Activated CD8-positive, alpha-beta T cell treated with anti-CD3 and anti-CD28 coated beads for 36 hours (primary cell): ENCODE measurements at regions of chr1 and their contacts with region 1.

Region 1: DNA sequence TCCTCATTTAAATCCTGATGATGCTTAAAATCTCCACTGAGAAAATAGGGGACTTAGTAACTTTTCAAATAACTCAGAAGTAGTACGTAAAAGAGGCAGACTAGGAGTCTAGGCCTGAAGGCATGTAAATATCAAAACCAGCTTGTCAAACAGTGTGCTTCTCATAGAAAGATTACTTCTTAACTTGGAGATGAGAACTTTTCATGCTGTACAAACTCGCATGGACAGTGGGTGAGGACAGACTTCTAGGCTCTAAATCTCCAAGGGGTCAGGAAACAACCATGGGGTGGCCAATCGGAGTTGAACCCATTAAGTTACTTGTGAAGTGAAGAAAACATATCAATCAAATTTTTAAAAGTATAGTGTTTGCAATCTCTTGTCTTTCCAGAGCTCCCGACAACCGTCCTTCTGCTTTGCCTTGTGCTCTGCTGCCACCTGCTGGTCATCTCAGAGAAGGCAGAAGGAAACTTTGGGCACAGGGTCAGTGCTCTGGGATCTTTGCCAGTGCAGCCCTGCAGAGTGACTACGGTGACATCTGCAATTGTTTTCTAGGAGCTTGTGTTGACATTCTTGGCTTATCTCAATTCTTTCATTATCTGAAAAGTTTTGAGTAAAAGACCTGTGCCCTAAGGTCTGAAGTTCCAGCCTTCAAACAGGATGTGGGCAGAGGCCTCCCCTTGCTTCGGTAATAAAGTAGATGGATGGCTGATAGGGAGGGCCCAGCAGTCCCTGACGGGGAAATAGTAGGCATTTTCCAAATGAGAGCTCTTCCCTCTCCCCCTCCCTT is 105.1 kb upstream of the PDE4B start:
- DNase-seq: peak; percentile 81
- ATAC-seq: peak; percentile 86
- H3K4me3 Mint-ChIP-seq: no peak overlapping the region
- H3K27ac Mint-ChIP-seq: no peak overlapping the region
- H3K4me1 Mint-ChIP-seq: no peaks in the 10 kb centered on the region
- H3K27me3 Mint-ChIP-seq: peaks cover 14% of the 10 kb centered on the region
- CTCF ChIP-seq: peak; percentile 96

Region 2: DNA sequence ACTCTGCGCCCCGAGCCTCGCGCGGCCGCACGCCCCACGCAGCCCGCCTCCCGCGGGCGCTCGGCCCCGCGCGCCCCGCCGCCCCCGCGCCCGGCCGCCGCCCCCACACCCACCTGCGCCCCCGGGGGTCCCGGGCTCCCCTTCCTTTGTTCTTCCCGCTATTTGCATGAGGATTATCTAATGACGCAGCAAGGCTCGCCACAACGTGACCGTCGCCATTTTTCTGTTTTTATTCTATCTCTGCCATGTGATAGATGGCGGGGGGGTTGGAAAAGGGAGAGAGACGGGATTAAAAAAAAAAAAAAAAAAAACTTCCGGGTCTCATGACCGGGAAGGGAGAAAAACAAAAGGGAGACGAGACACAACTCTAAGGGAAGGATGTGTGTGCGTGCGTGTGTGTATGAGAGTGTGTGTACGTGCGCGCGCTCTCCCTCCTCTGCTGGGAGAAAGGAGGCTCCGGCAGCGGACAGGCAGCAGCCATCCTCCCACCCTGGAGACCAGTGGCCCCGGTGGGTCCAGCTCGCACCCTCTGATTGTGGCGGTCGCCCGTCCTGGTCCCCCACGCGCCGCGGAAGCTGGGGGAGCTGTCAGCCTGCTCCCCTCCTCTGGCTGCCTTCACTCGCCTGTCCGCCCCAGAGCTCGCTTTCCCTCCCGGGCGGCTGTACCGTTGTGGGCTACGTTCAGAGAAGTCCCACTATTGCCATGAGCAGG is 620.0 kb before region 1 on chr1:
- CTCF ChIA-PET with region 1: interaction called, 15 read pairs
- POLR2A ChIA-PET with region 1: no interaction called
- intact Hi-C with region 1: loop called (anchors 5 kb)
- DNase-seq: peak; percentile 73
- ATAC-seq: peak; percentile 28
- H3K4me3 Mint-ChIP-seq: peak overlapping the region; percentile 91
- H3K27ac Mint-ChIP-seq: peak overlapping the region; percentile 99
- H3K4me1 Mint-ChIP-seq: peaks cover 43% of the 10 kb centered on the region
- H3K27me3 Mint-ChIP-seq: no peaks in the 10 kb centered on the region
- CTCF ChIP-seq: no peak

Region 3: DNA sequence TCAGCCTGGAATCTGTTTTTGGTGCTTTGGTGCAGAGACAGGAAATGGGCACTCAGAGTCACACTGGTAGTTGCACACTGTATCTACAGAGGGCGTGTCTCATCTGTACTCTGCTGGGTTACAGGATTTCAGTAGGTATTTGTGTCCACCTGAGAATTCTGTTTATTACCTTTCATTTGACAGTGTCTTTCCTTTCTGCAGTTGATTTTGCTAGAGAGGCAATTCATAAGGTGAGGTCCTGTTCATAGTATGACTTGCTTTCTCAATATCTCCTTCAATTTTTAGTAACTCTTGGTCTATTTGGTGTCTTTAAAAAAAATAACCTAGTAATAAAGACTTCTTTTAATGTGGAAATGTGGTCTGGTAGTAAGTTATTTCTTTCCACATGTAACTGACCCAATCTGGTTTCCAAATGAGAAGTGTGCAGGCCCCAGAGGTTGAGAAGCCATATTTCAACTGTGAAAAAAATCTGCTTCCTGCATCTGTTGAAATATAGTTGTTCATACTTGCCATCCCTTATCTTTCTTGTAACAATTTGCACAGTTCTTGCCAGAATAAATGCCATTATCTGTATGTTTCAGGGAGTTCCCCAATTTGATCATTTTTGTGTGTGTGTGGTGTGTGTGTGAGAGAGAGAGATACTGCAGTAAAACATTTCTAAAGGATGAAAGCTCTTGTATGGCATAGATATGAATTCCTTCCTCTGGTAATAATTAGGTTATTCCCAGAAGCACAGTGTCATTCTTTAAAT is 456.7 kb before region 1 on chr1:
- CTCF ChIA-PET with region 1: interaction called, 62 read pairs
- POLR2A ChIA-PET with region 1: no interaction called
- intact Hi-C with region 1: loop called (anchors 5 kb)
- DNase-seq: peak; percentile 27
- ATAC-seq: peak; percentile 81
- H3K4me3 Mint-ChIP-seq: no peak overlapping the region
- H3K27ac Mint-ChIP-seq: no peak overlapping the region
- H3K4me1 Mint-ChIP-seq: peaks cover 24% of the 10 kb centered on the region
- H3K27me3 Mint-ChIP-seq: peaks cover 9% of the 10 kb centered on the region
- CTCF ChIP-seq: no peak

Region 4: GRCh38 chr1:65235867-65236805 is 451.5 kb before region 1 on chr1:
- CTCF ChIA-PET with region 1: interaction called, 62 read pairs
- POLR2A ChIA-PET with region 1: no interaction called
- intact Hi-C with region 1: loop called (anchors 5 kb)
- DNase-seq: no peak
- ATAC-seq: no peak
- H3K4me3 Mint-ChIP-seq: no peak overlapping the region
- H3K27ac Mint-ChIP-seq: no peak overlapping the region
- H3K4me1 Mint-ChIP-seq: peaks cover 9% of the 10 kb centered on the region
- H3K27me3 Mint-ChIP-seq: peaks cover 13% of the 10 kb centered on the region
- CTCF ChIP-seq: peak; percentile 78

Region 5: GRCh38 chr1:65431111-65431705 is 256.4 kb before region 1 on chr1:
- CTCF ChIA-PET with region 1: interaction called, 13 read pairs
- POLR2A ChIA-PET with region 1: no interaction called
- intact Hi-C with region 1: loop called (anchors 5 kb)
- DNase-seq: no peak
- ATAC-seq: peak; percentile 34
- H3K4me3 Mint-ChIP-seq: no peak overlapping the region
- H3K27ac Mint-ChIP-seq: no peak overlapping the region
- H3K4me1 Mint-ChIP-seq: peaks cover 4% of the 10 kb centered on the region
- H3K27me3 Mint-ChIP-seq: no peaks in the 10 kb centered on the region
- CTCF ChIP-seq: peak; percentile 63

Region 6: GRCh38 chr1:65703853-65704252 is 16.2 kb after region 1 on chr1:
- CTCF ChIA-PET with region 1: interaction called, 10 read pairs
- POLR2A ChIA-PET with region 1: no interaction called
- intact Hi-C with region 1: no loop called
- DNase-seq: no peak
- ATAC-seq: no peak
- H3K4me3 Mint-ChIP-seq: no peak overlapping the region
- H3K27ac Mint-ChIP-seq: no peak overlapping the region
- H3K4me1 Mint-ChIP-seq: no peaks in the 10 kb centered on the region
- H3K27me3 Mint-ChIP-seq: peaks cover 24% of the 10 kb centered on the region
- CTCF ChIP-seq: no peak

Region 7: DNA sequence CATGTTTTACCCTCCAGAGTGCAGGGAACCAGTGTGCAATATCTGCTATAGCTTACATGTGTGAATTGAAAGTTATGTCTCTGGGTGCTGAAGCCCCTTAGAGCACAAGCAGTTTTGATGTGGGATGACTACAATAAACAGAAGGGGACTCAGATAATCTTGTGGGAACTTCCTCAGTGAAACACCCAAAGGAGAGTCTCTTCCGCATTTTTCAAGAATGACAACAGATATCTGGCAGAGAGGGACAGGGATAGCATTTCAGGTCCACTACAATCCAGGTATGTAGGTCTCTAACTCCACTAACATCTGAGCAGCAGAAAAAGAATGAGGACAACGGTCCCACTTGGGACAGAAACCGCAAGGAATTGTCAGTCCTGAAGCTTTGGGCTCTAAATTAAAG is 37.4 kb after region 1 on chr1:
- CTCF ChIA-PET with region 1: no interaction called
- POLR2A ChIA-PET with region 1: no interaction called
- intact Hi-C with region 1: no loop called
- DNase-seq: no peak
- ATAC-seq: no peak
- H3K4me3 Mint-ChIP-seq: no peak overlapping the region
- H3K27ac Mint-ChIP-seq: no peak overlapping the region
- H3K4me1 Mint-ChIP-seq: no peaks in the 10 kb centered on the region
- H3K27me3 Mint-ChIP-seq: peaks cover 9% of the 10 kb centered on the region
- CTCF ChIP-seq: no peak

Region 8: GRCh38 chr1:66090859-66091457 is 403.3 kb after region 1 on chr1:
- CTCF ChIA-PET with region 1: no interaction called
- POLR2A ChIA-PET with region 1: no interaction called
- intact Hi-C with region 1: no loop called
- DNase-seq: no peak
- ATAC-seq: no peak
- H3K4me3 Mint-ChIP-seq: no peak overlapping the region
- H3K27ac Mint-ChIP-seq: no peak overlapping the region
- H3K4me1 Mint-ChIP-seq: peaks cover 7% of the 10 kb centered on the region
- H3K27me3 Mint-ChIP-seq: peaks cover 1% of the 10 kb centered on the region
- CTCF ChIP-seq: no peak